MCF 10A (cell line): ENCODE measurements at regions of chr11 and their contacts with region 1.

Region 1: GRCh38 chr11:116879800-116880625 is 42.6 kb upstream of the APOA1 start:
- DNase-seq: peak; percentile 74
- H3K4me3 Mint-ChIP-seq: no peak overlapping the region
- H3K27ac Mint-ChIP-seq: no peak overlapping the region
- H3K4me1 Mint-ChIP-seq: no peaks in the 10 kb centered on the region
- H3K27me3 Mint-ChIP-seq: no peaks in the 10 kb centered on the region
- CTCF ChIP-seq: peak; percentile 60

Region 2: GRCh38 chr11:116357784-116358544 is 522.0 kb before region 1 on chr11:
- CTCF ChIA-PET with region 1: no interaction called
- POLR2A ChIA-PET with region 1: no interaction called
- intact Hi-C with region 1: no loop called
- DNase-seq: no peak
- H3K4me3 Mint-ChIP-seq: no peak overlapping the region
- H3K27ac Mint-ChIP-seq: no peak overlapping the region
- H3K4me1 Mint-ChIP-seq: no peaks in the 10 kb centered on the region
- H3K27me3 Mint-ChIP-seq: no peaks in the 10 kb centered on the region
- CTCF ChIP-seq: no peak

Region 3: DNA sequence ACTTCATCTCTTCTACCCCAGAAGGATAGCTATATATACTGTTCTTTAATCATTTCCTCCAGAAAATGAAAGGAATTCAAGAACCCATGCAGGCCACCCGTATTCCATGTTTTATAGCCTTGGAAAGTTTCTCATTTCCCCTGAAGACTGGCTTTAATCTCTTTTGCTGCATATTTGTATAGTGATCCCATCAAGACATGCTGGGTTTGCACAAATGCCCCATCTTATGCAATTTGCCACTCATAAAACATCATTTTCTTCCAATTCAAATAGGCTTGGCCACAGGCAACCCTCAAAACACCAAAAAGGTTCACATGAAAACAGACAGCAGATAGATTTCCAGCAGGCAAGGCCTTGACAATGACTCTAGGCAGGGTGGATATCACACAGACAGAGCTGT is 14.3 kb before region 1 on chr11:
- CTCF ChIA-PET with region 1: interaction called, 19 read pairs
- POLR2A ChIA-PET with region 1: no interaction called
- intact Hi-C with region 1: no loop called
- DNase-seq: no peak
- H3K4me3 Mint-ChIP-seq: no peak overlapping the region
- H3K27ac Mint-ChIP-seq: no peak overlapping the region
- H3K4me1 Mint-ChIP-seq: peaks cover 9% of the 10 kb centered on the region
- H3K27me3 Mint-ChIP-seq: no peaks in the 10 kb centered on the region
- CTCF ChIP-seq: no peak

Region 4: GRCh38 chr11:116890193-116890592 is 10.2 kb after region 1 on chr11:
- CTCF ChIA-PET with region 1: interaction called, 45 read pairs
- POLR2A ChIA-PET with region 1: no interaction called
- intact Hi-C with region 1: no loop called
- DNase-seq: no peak
- H3K4me3 Mint-ChIP-seq: no peak overlapping the region
- H3K27ac Mint-ChIP-seq: no peak overlapping the region
- H3K4me1 Mint-ChIP-seq: no peaks in the 10 kb centered on the region
- H3K27me3 Mint-ChIP-seq: no peaks in the 10 kb centered on the region
- CTCF ChIP-seq: no peak

Region 5: GRCh38 chr11:116916052-116916451 is 36.0 kb after region 1 on chr11:
- CTCF ChIA-PET with region 1: no interaction called
- POLR2A ChIA-PET with region 1: no interaction called
- intact Hi-C with region 1: no loop called
- DNase-seq: no peak
- H3K4me3 Mint-ChIP-seq: no peak overlapping the region
- H3K27ac Mint-ChIP-seq: no peak overlapping the region
- H3K4me1 Mint-ChIP-seq: peaks cover 6% of the 10 kb centered on the region
- H3K27me3 Mint-ChIP-seq: no peaks in the 10 kb centered on the region
- CTCF ChIP-seq: no peak

Region 6: DNA sequence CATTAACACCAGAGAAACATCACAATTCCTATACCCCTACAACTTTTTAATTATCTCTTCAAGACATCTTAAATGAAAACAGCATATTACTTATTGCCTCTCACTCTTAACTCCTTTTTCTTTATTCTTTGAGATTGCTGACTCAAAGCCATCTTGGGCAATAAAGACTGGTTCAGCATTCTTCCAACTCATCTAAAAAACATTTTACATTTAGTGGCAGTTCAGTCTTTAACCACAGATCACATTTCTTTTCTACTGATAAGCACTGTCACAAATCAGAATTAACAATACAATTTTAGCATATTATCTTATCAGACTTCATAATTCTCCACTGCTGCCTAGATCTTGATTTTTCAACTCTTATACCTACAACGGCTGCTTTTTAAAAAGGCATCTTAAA is 184.3 kb after region 1 on chr11:
- CTCF ChIA-PET with region 1: no interaction called
- POLR2A ChIA-PET with region 1: no interaction called
- intact Hi-C with region 1: no loop called
- DNase-seq: peak; percentile 20
- H3K4me3 Mint-ChIP-seq: no peak overlapping the region
- H3K27ac Mint-ChIP-seq: no peak overlapping the region
- H3K4me1 Mint-ChIP-seq: peaks cover 8% of the 10 kb centered on the region
- H3K27me3 Mint-ChIP-seq: no peaks in the 10 kb centered on the region
- CTCF ChIP-seq: no peak

Region 7: DNA sequence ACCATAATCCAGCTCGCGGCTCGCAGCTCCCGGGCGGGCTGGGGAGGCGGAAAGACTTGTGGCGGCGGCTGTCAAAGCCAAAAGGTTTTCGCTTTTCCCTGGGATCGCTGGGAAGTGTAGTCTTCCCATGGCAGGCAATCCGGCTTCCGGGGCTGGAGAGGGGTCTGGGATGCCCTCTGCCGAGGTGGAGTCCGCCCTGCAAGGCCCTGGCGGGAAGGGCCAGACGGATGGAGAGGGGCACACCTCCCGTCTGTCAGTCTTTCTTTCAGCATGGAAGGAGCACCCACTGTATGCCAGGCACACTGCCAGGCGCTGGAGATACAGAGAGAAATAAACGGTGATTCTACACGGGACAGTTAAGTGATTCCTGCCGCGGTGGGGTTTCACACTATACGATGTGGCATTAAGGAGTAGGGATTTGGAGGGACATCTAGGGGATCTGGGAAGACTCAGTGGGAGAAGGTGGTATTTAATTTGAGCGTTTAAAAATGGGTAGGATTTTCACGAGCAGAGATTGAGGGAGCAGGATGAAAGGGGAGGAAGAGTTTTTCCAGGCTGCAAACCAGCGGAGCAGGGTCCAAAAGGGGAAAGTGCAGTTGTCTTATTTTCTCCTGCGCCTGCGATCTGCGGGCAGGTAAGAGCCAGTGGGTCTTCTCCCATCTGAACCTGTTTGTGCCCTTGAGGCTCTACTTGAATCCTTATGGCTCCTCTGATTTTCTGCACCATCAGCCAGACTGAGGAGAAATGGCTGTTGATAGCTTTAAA is 436.4 kb after region 1 on chr11 and contains the start of gene BACE1:
- CTCF ChIA-PET with region 1: no interaction called
- POLR2A ChIA-PET with region 1: no interaction called
- intact Hi-C with region 1: no loop called
- DNase-seq: peak; percentile 85
- H3K4me3 Mint-ChIP-seq: peak within 1 kb of the TSS; percentile 83
- H3K27ac Mint-ChIP-seq: peak within 1 kb of the TSS; percentile 23
- H3K4me1 Mint-ChIP-seq: peaks cover 13% of the 10 kb centered on the region
- H3K27me3 Mint-ChIP-seq: no peaks in the 10 kb centered on the region
- CTCF ChIP-seq: no peak
- total RNA-seq, gene BACE1: 15.8 and 18.1 TPM in 2 replicates